ENCODE measurements at regions of chrX and their contacts with region 1.

Region 1: DNA sequence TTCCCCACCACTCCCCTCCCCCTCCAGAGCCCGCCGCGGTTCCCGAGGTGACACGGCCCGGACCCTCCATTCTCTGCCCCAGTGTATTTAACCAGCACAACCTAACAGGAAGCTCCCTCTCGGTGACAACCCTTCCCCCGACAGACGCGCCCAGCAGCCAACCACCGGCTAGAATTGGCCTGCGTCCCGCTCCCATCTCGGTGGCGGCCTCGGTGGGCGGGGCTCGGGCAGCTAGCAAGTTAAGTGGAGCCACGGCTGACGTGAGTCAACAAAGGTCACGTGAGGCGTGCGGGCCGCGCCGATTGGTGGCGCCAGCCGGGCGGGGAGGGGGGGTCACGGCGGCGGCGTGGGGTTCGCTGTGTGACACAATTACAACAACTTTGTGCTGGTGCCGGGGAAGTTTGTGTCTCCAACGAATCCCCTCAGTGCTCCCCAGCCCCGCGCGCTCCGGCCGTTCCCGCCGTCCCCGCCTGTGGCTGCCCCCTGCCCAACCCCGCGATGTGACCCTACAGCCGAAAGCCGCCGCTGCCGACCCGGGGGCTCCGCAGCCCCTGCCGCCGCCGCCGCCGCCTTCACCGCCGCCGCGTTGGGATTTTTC is at the start of gene KDM6A:
- DNase-seq: peak; percentile 98
- H3K4me3 Mint-ChIP-seq: peak within 1 kb of the TSS; percentile 95
- H3K27ac Mint-ChIP-seq: peak within 1 kb of the TSS; percentile 99
- H3K4me1 Mint-ChIP-seq: peaks cover 6% of the 10 kb centered on the region
- H3K27me3 Mint-ChIP-seq: no peaks in the 10 kb centered on the region
- total RNA-seq, gene KDM6A: 24.2 and 26.2 TPM in 2 replicates

Region 2: DNA sequence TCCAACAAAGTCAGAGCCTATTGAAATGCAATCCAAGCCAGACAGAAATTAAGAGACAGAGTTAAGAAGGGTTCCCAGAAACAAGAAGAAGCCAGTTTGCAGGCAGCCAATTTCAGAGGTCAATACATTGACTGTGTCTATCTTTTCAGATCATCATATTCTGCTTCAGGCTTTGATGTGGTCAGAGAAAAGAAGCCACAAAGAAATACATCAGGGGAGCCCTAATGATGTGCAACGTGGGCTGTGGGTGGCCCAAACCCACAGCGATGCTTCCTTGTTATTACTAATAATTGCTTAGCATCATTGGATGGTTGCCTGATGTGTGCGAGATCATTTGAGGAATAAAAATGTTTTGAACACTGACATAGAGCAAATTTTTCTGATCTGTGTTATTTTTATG is 128.1 kb before region 1 on chrX:
- intact Hi-C with region 1: no loop called
- DNase-seq: no peak
- H3K4me3 Mint-ChIP-seq: no peak overlapping the region
- H3K27ac Mint-ChIP-seq: no peak overlapping the region
- H3K4me1 Mint-ChIP-seq: no peaks in the 10 kb centered on the region
- H3K27me3 Mint-ChIP-seq: no peaks in the 10 kb centered on the region

Region 3: GRCh38 chrX:44785652-44786051 is 87.3 kb before region 1 on chrX:
- intact Hi-C with region 1: no loop called
- DNase-seq: no peak
- H3K4me3 Mint-ChIP-seq: no peak overlapping the region
- H3K27ac Mint-ChIP-seq: no peak overlapping the region
- H3K4me1 Mint-ChIP-seq: no peaks in the 10 kb centered on the region
- H3K27me3 Mint-ChIP-seq: no peaks in the 10 kb centered on the region

Region 4: DNA sequence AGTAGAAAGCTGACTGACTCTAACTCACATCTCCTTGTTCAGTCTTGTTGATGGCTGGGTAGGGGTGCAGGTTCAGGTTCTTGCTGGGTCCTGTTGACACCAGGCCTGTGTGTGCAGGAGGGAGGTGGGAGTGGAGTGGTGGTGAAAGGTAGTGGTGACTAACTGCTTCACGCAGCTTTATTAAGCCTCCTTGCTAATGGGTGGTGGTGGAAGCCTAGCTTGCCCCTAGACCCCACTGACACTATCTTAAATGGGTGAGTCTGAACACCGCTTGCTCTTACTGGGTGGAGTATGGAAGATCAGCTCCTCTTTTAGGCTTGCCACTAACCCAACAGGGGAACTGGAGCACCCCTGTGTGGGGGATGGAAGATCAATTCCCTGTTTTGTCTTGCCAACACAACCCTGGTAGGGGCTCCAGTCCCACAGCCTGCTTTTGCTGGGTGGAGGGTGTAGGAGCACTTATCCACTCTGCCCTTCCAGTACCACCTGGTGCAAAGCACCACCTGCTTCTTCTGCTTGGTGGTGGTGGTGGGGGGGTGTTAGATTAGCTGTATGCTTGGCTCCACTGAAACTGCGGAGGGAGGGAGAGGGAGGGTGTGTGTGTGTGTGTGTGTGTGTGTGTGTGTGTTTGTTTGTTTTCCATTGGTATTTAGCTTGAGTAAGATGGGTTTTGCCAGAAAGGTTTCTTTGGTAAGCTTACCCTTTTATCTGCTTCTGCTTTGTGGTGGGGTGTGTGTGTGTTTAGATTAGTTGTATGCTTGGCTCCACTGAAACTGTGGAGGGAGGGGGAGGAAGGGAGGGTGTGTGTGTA is 25.7 kb after region 1 on chrX:
- intact Hi-C with region 1: loop called (anchors 2 kb)
- DNase-seq: peak; percentile 62
- H3K4me3 Mint-ChIP-seq: peak overlapping the region; percentile 50
- H3K27ac Mint-ChIP-seq: peak overlapping the region; percentile 87
- H3K4me1 Mint-ChIP-seq: peaks cover 22% of the 10 kb centered on the region
- H3K27me3 Mint-ChIP-seq: no peaks in the 10 kb centered on the region

Region 5: GRCh38 chrX:44997888-44998287 is 125.0 kb after region 1 on chrX:
- intact Hi-C with region 1: loop called (anchors 10 kb)
- DNase-seq: peak; percentile 57
- H3K4me3 Mint-ChIP-seq: peak overlapping the region; percentile 52
- H3K27ac Mint-ChIP-seq: peak overlapping the region; percentile 68
- H3K4me1 Mint-ChIP-seq: peaks cover 36% of the 10 kb centered on the region
- H3K27me3 Mint-ChIP-seq: no peaks in the 10 kb centered on the region

Region 6: GRCh38 chrX:45769761-45770582 is 897.1 kb after region 1 on chrX:
- intact Hi-C with region 1: loop called (anchors 10 kb)
- DNase-seq: peak; percentile 77
- H3K4me3 Mint-ChIP-seq: peak overlapping the region; percentile 84
- H3K27ac Mint-ChIP-seq: peak overlapping the region; percentile 95
- H3K4me1 Mint-ChIP-seq: peaks cover 40% of the 10 kb centered on the region
- H3K27me3 Mint-ChIP-seq: no peaks in the 10 kb centered on the region

Measured in activated CD4-positive, alpha-beta T cell treated with anti-CD3 and anti-CD28 coated beads, Interleukin-2, amount 10 ng/mL, durations not matched to agents 24 days and 14 days (primary cell).